PC-3 (cell line): ENCODE measurements at regions of chr5 and their contacts with region 1.

Region 1: GRCh38 chr5:147628058-147628895 is 118.4 kb upstream of the DPYSL3 start:
- DNase-seq: peak; percentile 97
- ATAC-seq: peak; percentile 96
- H3K4me3 ChIP-seq: no peak overlapping the region
- H3K27ac ChIP-seq: no peak overlapping the region
- H3K4me1 ChIP-seq: no peaks in the 10 kb centered on the region
- H3K27me3 ChIP-seq: no peaks in the 10 kb centered on the region
- CTCF ChIP-seq: peak; percentile 95

Region 2: GRCh38 chr5:147675168-147675567 is 46.9 kb after region 1 on chr5:
- CTCF ChIA-PET with region 1: interaction called, 3 read pairs
- POLR2A ChIA-PET with region 1: no interaction called
- intact Hi-C with region 1: loop called (anchors 1 kb)
- DNase-seq: peak; percentile 48
- ATAC-seq: peak; percentile 81
- H3K4me3 ChIP-seq: no peak overlapping the region
- H3K27ac ChIP-seq: no peak overlapping the region
- H3K4me1 ChIP-seq: no peaks in the 10 kb centered on the region
- H3K27me3 ChIP-seq: peaks cover 15% of the 10 kb centered on the region
- CTCF ChIP-seq: peak; percentile 44; the same call in 1 of the 2 replicates

Region 3: GRCh38 chr5:147690595-147690994 is 62.3 kb after region 1 on chr5:
- CTCF ChIA-PET with region 1: interaction called, 14 read pairs
- POLR2A ChIA-PET with region 1: no interaction called
- intact Hi-C with region 1: loop called (anchors 5 kb)
- DNase-seq: peak; percentile 90
- ATAC-seq: peak; percentile 74
- H3K4me3 ChIP-seq: no peak overlapping the region
- H3K27ac ChIP-seq: no peak overlapping the region
- H3K4me1 ChIP-seq: peaks cover 17% of the 10 kb centered on the region
- H3K27me3 ChIP-seq: no peaks in the 10 kb centered on the region
- CTCF ChIP-seq: peak; percentile 83

Region 4: GRCh38 chr5:147822686-147823491 is 194.6 kb after region 1 on chr5:
- CTCF ChIA-PET with region 1: interaction called, 10 read pairs
- POLR2A ChIA-PET with region 1: no interaction called
- intact Hi-C with region 1: loop called (anchors 1 kb)
- DNase-seq: peak; percentile 90
- ATAC-seq: peak; percentile 71
- H3K4me3 ChIP-seq: no peak overlapping the region
- H3K27ac ChIP-seq: no peak overlapping the region
- H3K4me1 ChIP-seq: peaks cover 16% of the 10 kb centered on the region
- H3K27me3 ChIP-seq: no peaks in the 10 kb centered on the region
- CTCF ChIP-seq: peak; percentile 99

Region 5: DNA sequence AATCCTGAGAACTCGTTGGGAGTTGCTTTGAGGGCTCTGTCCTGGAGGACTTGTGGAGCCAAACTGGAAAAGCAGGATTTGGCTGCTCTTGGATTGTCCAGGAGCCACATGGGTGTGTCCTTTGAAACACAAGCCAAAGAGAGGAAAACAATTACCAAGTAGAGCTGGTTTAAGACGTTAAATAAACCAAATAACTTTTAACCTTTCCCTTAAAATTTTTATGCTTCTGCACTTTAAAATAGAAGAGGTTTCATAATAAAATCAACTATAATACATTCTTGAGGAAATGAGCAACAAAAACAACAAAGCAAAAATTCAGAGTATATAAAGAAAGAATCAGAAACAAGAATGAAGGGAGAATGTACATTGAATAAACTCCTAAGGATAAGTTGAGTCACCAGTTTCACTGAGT is 264.6 kb after region 1 on chr5:
- CTCF ChIA-PET with region 1: no interaction called
- POLR2A ChIA-PET with region 1: no interaction called
- intact Hi-C with region 1: no loop called
- DNase-seq: peak; percentile 99
- ATAC-seq: peak; percentile 78
- H3K4me3 ChIP-seq: no peak overlapping the region
- H3K27ac ChIP-seq: peak overlapping the region; percentile 97
- H3K4me1 ChIP-seq: peaks cover 93% of the 10 kb centered on the region
- H3K27me3 ChIP-seq: no peaks in the 10 kb centered on the region
- CTCF ChIP-seq: no peak